Prostate gland (tissue), 2 donors: ENCODE measurements at regions of chr20 and their contacts with region 1.

Region 1: GRCh38 chr20:354298-355064 is 7.6 kb downstream of the NRSN2 start:
- DNase-seq: peak; percentile 68
- H3K4me3 ChIP-seq: no peak overlapping the region
- H3K27ac ChIP-seq: no peak overlapping the region
- H3K4me1 ChIP-seq: no peaks in the 10 kb centered on the region
- H3K27me3 ChIP-seq: no peaks in the 10 kb centered on the region
- CTCF ChIP-seq: peak; percentile 84 to 95 (median 91)
- POLR2A ChIP-seq: no peak

Region 2: GRCh38 chr20:407133-407952 is 52.9 kb after region 1 on chr20:
- intact Hi-C with region 1: loop called (anchors 5 kb)
- DNase-seq: peak; percentile 61
- H3K4me3 ChIP-seq: peak overlapping the region; percentile 88 to 99
- H3K27ac ChIP-seq: peak overlapping the region; percentile 95 to 97
- H3K4me1 ChIP-seq: peaks cover 11% of the 10 kb centered on the region
- H3K27me3 ChIP-seq: no peaks in the 10 kb centered on the region
- CTCF ChIP-seq: peak in 1 of 4 experiments; percentile 20
- POLR2A ChIP-seq: peak; percentile 35

Region 3: DNA sequence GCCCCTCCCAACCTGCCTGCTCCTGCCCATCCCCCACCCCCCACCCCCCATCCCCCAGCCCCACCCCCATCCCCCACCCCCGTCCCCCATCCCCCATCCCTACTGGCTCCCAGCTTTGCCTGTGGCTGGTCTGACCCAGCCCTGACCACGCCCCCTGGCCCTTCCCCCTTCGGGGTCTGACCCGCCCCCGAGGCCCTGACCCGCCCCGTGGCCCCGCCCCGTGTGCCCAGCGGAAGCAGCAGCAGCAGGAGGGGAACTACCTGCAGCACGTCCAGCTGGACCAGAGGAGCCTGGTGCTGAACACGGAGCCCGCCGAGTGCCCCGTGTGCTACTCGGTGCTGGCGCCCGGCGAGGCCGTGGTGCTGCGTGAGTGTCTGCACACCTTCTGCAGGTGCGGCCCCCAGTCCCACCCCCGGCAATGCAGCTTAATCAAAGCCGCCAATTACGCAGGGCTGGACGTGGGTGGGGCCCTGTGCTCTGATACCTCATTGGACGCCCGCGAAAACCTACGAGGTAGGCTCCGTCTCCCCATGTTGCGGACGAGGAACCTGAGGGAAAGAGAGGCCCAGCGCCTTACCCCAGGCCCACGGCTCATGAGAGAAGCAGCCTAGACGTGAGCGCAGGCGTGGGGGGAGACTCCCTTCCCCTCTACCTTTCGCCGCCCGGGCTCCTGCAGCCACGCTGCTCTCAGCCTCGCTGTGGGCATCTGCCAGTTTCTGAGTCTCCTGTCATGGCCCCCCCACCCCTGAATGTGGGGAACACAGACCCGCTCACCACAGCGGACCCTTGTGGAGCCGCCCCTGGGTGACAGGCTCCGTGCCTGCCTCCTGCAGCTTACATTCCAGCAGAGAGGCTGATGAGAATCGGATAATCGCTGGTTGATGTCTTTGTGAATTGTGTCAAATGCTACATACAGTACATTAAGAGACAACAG is 66.4 kb after region 1 on chr20:
- intact Hi-C with region 1: no loop called
- DNase-seq: no peak
- H3K4me3 ChIP-seq: no peak overlapping the region
- H3K27ac ChIP-seq: no peak overlapping the region
- H3K4me1 ChIP-seq: no peaks in the 10 kb centered on the region
- H3K27me3 ChIP-seq: no peaks in the 10 kb centered on the region
- CTCF ChIP-seq: no peak
- POLR2A ChIP-seq: no peak

Region 4: DNA sequence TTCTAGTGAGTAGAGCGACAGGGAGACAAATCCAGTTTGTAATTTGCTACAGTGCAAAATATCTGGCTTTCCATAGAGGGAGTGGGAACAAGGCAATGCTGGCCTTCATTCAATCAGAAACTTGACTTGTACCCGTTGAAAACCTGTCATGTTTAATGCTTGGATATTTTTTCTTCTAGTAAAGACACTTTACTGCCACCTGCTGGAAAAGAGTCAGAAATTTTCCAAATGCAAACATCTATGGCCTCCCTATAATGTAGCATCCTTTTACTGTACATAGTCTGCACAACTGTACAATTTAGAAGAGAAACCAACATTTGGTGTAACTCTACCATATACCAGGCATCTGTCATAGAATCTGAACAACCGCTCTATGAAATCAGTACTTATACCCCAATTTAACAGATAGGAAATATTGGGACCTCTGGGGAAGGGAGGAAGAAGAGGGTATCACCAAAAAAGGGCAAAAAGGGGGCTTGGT is 124.5 kb after region 1 on chr20:
- intact Hi-C with region 1: loop called (anchors 2 kb)
- DNase-seq: peak; percentile 39
- H3K4me3 ChIP-seq: no peak overlapping the region
- H3K27ac ChIP-seq: no peak overlapping the region
- H3K4me1 ChIP-seq: no peaks in the 10 kb centered on the region
- H3K27me3 ChIP-seq: no peaks in the 10 kb centered on the region
- CTCF ChIP-seq: peak; percentile 47 to 72 (median 70)
- POLR2A ChIP-seq: no peak

Region 5: GRCh38 chr20:645318-646106 is 291.0 kb after region 1 on chr20:
- intact Hi-C with region 1: loop called (anchors 5 kb)
- DNase-seq: peak; percentile 25
- H3K4me3 ChIP-seq: no peak overlapping the region
- H3K27ac ChIP-seq: no peak overlapping the region
- H3K4me1 ChIP-seq: no peaks in the 10 kb centered on the region
- H3K27me3 ChIP-seq: no peaks in the 10 kb centered on the region
- CTCF ChIP-seq: peak; percentile 67 to 85 (median 84)
- POLR2A ChIP-seq: no peak

Region 6: DNA sequence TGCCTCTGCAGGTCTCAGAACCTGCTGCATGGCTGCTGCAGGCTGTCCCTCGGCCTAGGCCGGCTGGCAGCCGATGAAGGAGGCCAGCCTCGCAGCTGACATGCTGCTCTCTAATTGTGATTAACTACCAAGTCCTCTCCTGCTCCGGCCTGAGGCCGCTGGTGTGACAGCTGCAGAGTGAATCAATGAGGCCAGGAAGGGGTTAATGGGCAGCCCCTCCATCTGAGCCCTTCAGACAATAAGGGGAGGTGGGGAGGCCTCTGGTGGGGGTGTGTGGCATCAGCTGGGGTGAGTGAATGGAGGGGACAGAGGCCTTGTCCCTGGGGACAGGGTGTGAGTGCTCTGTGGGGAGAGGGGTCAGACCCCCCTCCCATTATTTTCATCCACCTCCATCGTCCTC is 379.4 kb after region 1 on chr20:
- intact Hi-C with region 1: loop called (anchors 10 kb)
- DNase-seq: no peak
- H3K4me3 ChIP-seq: no peak overlapping the region
- H3K27ac ChIP-seq: no peak overlapping the region
- H3K4me1 ChIP-seq: no peaks in the 10 kb centered on the region
- H3K27me3 ChIP-seq: no peaks in the 10 kb centered on the region
- CTCF ChIP-seq: no peak
- POLR2A ChIP-seq: no peak